ENCODE measurements at regions of chr12 and their contacts with region 1.

Region 1: DNA sequence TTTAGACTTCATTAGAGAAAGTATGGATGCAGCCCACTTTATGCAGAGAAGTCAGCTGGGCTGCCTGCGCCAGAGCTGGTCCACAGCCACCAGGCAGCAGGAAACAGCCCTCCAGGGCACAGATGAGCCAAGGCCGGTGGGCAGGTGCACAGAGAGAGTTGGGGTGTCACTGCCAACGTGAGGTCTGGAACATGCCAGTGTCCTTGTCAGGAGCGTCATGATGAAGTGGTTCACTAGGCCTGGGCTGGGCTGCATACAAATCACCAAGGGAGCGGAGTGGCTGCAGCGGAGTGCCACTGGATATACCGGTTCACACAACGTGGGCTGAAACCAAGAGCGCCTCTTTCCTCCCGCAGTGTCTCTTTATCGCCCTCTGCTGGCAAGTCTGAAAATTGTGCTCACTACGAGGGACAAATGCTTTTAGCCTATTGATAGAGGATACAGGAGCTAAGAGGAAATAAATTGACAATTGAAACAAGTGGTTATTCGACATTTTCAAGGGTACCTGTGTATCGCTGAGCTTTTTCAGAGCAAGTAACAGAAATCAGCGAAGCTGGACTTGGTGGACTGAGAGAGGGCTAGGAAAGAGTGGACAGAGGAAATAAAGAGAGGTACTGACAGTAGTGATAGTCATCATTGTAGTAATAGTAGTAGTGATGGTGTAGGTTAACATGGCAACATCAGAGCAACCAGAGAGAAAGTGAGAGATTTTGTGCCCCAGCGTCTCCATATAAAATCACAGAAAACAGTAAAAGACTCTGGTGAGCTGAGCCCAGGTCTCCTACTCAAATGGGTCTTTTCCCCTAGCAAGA is 52.0 kb upstream of the ITPR2 start:
- DNase-seq: peak; percentile 78 to 87 (median 80)
- ATAC-seq: peak; percentile 93
- H3K4me3 ChIP-seq: no peak overlapping the region
- H3K27ac ChIP-seq: no peak overlapping the region
- H3K4me1 ChIP-seq: peaks cover 2% of the 10 kb centered on the region
- H3K27me3 ChIP-seq: no peaks in the 10 kb centered on the region

Region 2: DNA sequence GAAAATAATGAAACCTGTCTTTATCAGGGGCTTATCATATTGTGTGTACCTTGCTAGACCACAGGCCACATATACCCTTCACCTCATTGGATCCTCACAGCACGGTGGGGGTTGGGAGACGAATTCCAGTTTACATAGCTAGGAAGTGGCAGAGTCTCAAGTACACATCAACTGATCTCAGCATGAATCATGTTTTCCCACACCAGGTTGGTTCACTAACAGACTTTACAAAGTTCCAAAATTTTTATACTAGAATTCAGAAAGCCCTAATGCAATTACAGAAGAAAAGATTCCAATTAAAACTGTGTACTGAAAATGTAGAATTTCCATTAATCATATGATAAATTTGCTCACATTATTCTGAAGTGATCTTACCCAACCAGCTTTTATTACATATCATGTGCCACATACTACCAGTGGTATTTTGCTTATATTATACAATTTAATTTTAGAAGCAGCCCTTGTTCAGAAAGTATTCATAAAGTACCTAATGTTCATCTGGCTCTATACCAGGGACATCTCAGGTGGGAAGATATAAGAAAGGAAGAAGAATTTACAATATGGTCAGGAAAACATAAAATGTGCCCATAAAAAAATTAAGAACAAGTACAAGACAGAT is 248.2 kb before region 1 on chr12:
- intact Hi-C with region 1: no loop called
- DNase-seq: no peak
- ATAC-seq: no peak
- H3K4me3 ChIP-seq: no peak overlapping the region
- H3K27ac ChIP-seq: no peak overlapping the region
- H3K4me1 ChIP-seq: no peaks in the 10 kb centered on the region
- H3K27me3 ChIP-seq: no peaks in the 10 kb centered on the region

Region 3: GRCh38 chr12:26773313-26774104 is 111.5 kb before region 1 on chr12:
- intact Hi-C with region 1: no loop called
- DNase-seq: no peak
- ATAC-seq: no peak
- H3K4me3 ChIP-seq: no peak overlapping the region
- H3K27ac ChIP-seq: no peak overlapping the region
- H3K4me1 ChIP-seq: peaks cover 3% of the 10 kb centered on the region
- H3K27me3 ChIP-seq: no peaks in the 10 kb centered on the region

Region 4: GRCh38 chr12:26853303-26854030 is 31.5 kb before region 1 on chr12:
- intact Hi-C with region 1: loop called in 3 of 4 experiments (anchors 2 kb)
- DNase-seq: peak; percentile 61 to 85 (median 79)
- ATAC-seq: peak; percentile 67 to 81
- H3K4me3 ChIP-seq: no peak overlapping the region
- H3K27ac ChIP-seq: no peak overlapping the region
- H3K4me1 ChIP-seq: no peaks in the 10 kb centered on the region
- H3K27me3 ChIP-seq: no peaks in the 10 kb centered on the region

Region 5: GRCh38 chr12:27076933-27077332 is 192.0 kb after region 1 on chr12:
- intact Hi-C with region 1: no loop called
- DNase-seq: no peak
- ATAC-seq: no peak
- H3K4me3 ChIP-seq: no peak overlapping the region
- H3K27ac ChIP-seq: no peak overlapping the region
- H3K4me1 ChIP-seq: no peaks in the 10 kb centered on the region
- H3K27me3 ChIP-seq: no peaks in the 10 kb centered on the region

Measured in right cardiac atrium (tissue), 5 donors.